Prostate gland (tissue), 2 donors: ENCODE measurements at regions of chr7 and their contacts with region 1.

Region 1: GRCh38 chr7:135282561-135283254 is 49.1 kb downstream of the STRA8 start:
- DNase-seq: no peak
- H3K4me3 ChIP-seq: no peak overlapping the region
- H3K27ac ChIP-seq: no peak overlapping the region
- H3K4me1 ChIP-seq: no peaks in the 10 kb centered on the region
- H3K27me3 ChIP-seq: no peaks in the 10 kb centered on the region
- CTCF ChIP-seq: no peak
- POLR2A ChIP-seq: no peak

Region 2: GRCh38 chr7:135428011-135428410 is 145.3 kb after region 1 on chr7:
- intact Hi-C with region 1: no loop called
- DNase-seq: no peak
- H3K4me3 ChIP-seq: no peak overlapping the region
- H3K27ac ChIP-seq: no peak overlapping the region
- H3K4me1 ChIP-seq: no peaks in the 10 kb centered on the region
- H3K27me3 ChIP-seq: no peaks in the 10 kb centered on the region
- CTCF ChIP-seq: no peak
- POLR2A ChIP-seq: no peak

Region 3: DNA sequence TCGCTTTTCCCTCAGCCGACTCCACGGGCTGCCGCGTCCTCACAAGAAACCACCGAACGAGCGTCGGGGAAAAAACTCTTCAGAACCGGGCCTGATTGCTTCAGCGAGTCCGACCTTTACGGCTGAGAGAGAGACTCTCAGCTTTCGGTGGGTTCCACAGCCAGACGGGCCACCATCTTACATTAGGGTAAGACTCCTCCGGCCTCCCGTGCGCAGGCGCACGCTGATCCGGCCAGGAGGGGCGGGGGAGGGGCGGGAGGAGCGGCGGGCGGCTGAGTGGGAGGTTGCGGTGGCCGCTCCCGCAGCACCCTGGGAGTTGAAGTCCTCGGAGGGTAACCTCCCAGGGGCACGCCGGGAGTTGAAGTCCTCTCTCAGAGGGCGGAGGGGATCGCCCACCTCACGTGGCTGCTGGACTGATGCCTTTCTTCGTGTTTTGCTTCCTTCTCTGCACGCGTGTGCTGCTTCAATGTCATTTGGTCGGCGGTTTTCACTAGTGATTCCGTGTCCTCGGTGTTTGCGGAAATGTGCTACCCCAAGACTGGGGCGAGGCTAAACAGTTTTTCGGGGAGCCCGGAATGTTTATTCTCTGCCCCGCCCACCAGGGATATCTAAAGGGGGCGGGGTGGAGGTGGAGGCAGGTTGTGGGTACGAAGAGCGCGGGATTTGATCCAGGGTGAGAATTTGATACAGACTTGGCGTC is 227.3 kb after region 1 on chr7 and contains the start of gene CNOT4:
- intact Hi-C with region 1: loop called (anchors 5 kb)
- DNase-seq: peak; percentile 94
- H3K4me3 ChIP-seq: peak within 1 kb of the TSS; percentile 62 to 76
- H3K27ac ChIP-seq: peak within 1 kb of the TSS; percentile 92 to 93
- H3K4me1 ChIP-seq: no peaks in the 10 kb centered on the region
- H3K27me3 ChIP-seq: no peaks in the 10 kb centered on the region
- CTCF ChIP-seq: no peak
- POLR2A ChIP-seq: peak; percentile 76
- total RNA-seq, gene CNOT4: 19.0 to 44.7 TPM

Region 4: DNA sequence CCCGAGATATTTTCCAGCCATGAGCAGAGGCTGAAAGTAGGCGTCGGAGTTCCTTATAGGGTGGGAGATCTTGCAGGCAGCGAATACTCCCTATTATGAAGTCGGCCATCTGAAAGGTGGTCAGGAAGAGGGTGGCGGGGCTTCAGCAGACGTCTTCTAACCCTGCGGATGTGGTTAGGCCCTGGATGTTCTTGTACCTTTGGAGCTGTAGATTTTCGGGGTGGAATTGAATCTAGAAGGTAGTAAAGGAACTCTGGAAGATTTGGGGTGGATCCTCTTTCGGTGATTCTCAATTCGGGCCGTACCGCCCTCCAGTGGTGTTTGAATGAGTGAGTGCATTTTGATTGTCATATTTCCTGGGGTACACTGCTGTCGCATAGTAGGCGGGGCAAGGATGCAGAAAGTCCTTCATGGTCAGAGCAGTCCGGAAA is 275.6 kb after region 1 on chr7:
- intact Hi-C with region 1: loop called (anchors 2 kb)
- DNase-seq: peak; percentile 40
- H3K4me3 ChIP-seq: peak overlapping the region; percentile 59 to 78
- H3K27ac ChIP-seq: peak overlapping the region; percentile 83 to 96
- H3K4me1 ChIP-seq: no peaks in the 10 kb centered on the region
- H3K27me3 ChIP-seq: no peaks in the 10 kb centered on the region
- CTCF ChIP-seq: peak; percentile 24 to 52 (median 50)
- POLR2A ChIP-seq: no peak

Region 5: GRCh38 chr7:135645296-135645904 is 362.7 kb after region 1 on chr7:
- intact Hi-C with region 1: loop called (anchors 2 kb)
- DNase-seq: peak; percentile 20
- H3K4me3 ChIP-seq: no peak overlapping the region
- H3K27ac ChIP-seq: no peak overlapping the region
- H3K4me1 ChIP-seq: no peaks in the 10 kb centered on the region
- H3K27me3 ChIP-seq: no peaks in the 10 kb centered on the region
- CTCF ChIP-seq: peak in 3 of 4 experiments; percentile 48 to 73 (median 70)
- POLR2A ChIP-seq: no peak